CD8-positive, alpha-beta T cell (primary cell): ENCODE measurements at regions of chr15 and their contacts with region 1.

Region 1: GRCh38 chr15:45205192-45205591 is 17.4 kb upstream of the SHF start:
- DNase-seq: peak in 6 of 9 experiments; percentile 35 to 78 (median 61)
- ATAC-seq: peak; percentile 11
- H3K4me3 ChIP-seq: no peak overlapping the region
- H3K4me3 Mint-ChIP-seq: no peak overlapping the region
- H3K27ac ChIP-seq: no peak overlapping the region
- H3K27ac Mint-ChIP-seq: no peak overlapping the region
- H3K4me1 ChIP-seq: peaks cover 5% of the 10 kb centered on the region
- H3K4me1 Mint-ChIP-seq: no peaks in the 10 kb centered on the region
- H3K27me3 ChIP-seq: no peaks in the 10 kb centered on the region
- H3K27me3 Mint-ChIP-seq: peaks cover 12% of the 10 kb centered on the region
- CTCF ChIP-seq: peak; percentile 70

Region 2: GRCh38 chr15:45179221-45179985 is 25.8 kb before region 1 on chr15:
- CTCF ChIA-PET with region 1: interaction called, 34 read pairs
- POLR2A ChIA-PET with region 1: interaction called, 9 read pairs
- intact Hi-C with region 1: no loop called
- DNase-seq: peak in 8 of 9 experiments; percentile 37 to 71 (median 59)
- ATAC-seq: peak; percentile 67
- H3K4me3 ChIP-seq: no peak overlapping the region
- H3K4me3 Mint-ChIP-seq: no peak overlapping the region
- H3K27ac ChIP-seq: no peak overlapping the region
- H3K27ac Mint-ChIP-seq: no peak overlapping the region
- H3K4me1 ChIP-seq: no peaks in the 10 kb centered on the region
- H3K4me1 Mint-ChIP-seq: peaks cover 15% of the 10 kb centered on the region
- H3K27me3 ChIP-seq: no peaks in the 10 kb centered on the region
- H3K27me3 Mint-ChIP-seq: no peaks in the 10 kb centered on the region
- CTCF ChIP-seq: peak; percentile 46

Region 3: DNA sequence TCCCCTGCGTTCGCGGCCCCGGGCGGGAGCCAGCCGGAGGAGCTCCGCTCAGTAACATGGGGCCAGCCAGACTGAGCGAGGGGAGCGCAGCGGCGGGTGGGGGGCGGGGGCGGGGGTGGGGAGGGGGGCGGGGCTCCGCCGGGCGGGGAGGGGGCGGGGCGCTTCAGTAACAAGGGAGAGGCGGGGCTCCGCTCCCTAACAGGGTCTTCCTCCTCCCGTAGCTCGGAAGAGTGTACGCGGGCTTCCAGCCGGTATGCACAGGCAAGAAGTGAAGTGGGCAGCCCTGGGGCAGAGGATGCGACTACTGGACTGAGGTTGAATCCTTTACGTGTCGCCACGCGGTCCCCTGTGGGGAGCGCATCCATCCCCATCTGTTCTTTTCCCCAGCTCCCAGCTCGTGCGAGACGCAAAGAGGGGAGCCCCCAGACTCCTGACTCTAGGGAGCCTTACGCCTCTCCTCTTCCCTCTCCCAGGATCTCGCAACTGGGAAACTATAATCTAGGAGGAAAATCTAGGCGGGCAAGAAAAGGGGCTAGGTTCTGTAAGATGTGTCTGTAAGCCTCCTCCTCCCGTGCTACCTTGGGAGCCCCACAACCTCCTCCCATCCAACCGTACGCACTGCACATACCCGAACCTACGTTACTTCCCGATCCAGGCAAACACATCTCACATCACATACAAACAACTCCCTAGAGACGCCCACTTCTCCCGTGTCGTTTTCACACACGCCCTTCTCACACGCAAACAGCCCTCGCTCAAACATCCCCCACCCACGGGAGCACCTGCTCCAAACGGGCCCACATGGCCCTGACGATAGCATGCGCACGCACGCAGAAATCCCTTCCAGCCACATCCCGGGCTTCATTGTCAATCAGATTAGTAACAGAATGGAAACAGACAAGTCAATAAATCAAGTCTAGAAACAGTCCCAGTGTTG is 17.0 kb before region 1 on chr15 and contains the start of gene SHF:
- CTCF ChIA-PET with region 1: interaction called, 19 read pairs
- POLR2A ChIA-PET with region 1: interaction called, 107 read pairs
- intact Hi-C with region 1: no loop called
- DNase-seq: peak; percentile 24 to 87 (median 68)
- ATAC-seq: peak; percentile 79
- H3K4me3 ChIP-seq: peak within 1 kb of the TSS; percentile 84 to 99
- H3K4me3 Mint-ChIP-seq: peak within 1 kb of the TSS; percentile 89
- H3K27ac ChIP-seq: peak within 1 kb of the TSS; percentile 71 to 73
- H3K27ac Mint-ChIP-seq: peak within 1 kb of the TSS; percentile 90
- H3K4me1 ChIP-seq: peaks cover 16% of the 10 kb centered on the region
- H3K4me1 Mint-ChIP-seq: peaks cover 26% of the 10 kb centered on the region
- H3K27me3 ChIP-seq: no peaks in the 10 kb centered on the region
- H3K27me3 Mint-ChIP-seq: no peaks in the 10 kb centered on the region
- CTCF ChIP-seq: no peak
- total RNA-seq, gene SHF: 5.0 to 5.6 TPM

Region 4: DNA sequence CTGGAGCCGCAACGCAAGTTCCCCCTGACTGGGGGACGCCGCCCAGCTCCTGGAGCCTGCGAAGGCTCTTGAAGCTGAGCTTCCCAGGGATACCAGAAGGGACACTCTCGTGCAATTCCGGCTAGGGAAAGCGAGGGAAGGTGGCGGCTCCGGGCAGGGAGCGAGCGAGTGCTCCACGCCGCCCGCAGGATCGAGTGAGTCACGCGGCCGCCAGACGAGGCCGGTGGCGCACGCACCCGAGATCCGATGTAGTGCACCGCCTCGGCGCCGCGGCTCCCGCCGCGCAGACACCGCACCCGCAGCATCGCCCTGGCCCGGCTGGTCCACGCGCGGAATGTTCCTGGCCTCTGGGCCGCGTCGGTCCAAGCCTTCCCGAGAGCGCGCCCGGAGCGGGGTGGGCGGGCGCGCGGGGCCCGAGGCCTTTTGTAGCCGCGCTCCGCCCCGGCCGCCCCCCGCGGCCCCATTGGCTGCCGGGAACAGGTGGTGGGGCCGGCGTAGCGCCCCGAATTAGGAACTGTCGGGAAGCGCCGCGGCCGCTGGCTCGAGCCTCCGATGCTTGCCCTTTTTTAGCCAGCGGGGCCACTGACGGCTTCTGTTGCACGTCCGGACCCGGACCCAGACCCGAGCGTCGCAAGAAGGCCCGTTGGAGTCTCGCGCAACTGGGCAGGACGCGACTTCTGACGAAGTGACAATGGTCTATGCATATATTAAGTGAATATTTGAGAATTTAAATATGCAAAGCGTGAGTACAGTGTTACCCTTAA is 173.1 kb after region 1 on chr15 and contains the start of gene GATM:
- CTCF ChIA-PET with region 1: interaction called, 5 read pairs
- POLR2A ChIA-PET with region 1: interaction called, 4 read pairs
- intact Hi-C with region 1: loop called in 1 of 2 experiments (anchors 1 kb)
- DNase-seq: peak in 8 of 9 experiments; percentile 12 to 70 (median 52)
- ATAC-seq: peak; percentile 78
- H3K4me3 ChIP-seq: peak within 1 kb of the TSS; percentile 47 to 79
- H3K4me3 Mint-ChIP-seq: peak within 1 kb of the TSS; percentile 85
- H3K27ac ChIP-seq: no peak within 1 kb of the TSS
- H3K27ac Mint-ChIP-seq: peak within 1 kb of the TSS; percentile 62
- H3K4me1 ChIP-seq: peaks cover 17% of the 10 kb centered on the region
- H3K4me1 Mint-ChIP-seq: peaks cover 23% of the 10 kb centered on the region
- H3K27me3 ChIP-seq: peaks cover 5 to 19% of the 10 kb centered on the region in 2 experiments
- H3K27me3 Mint-ChIP-seq: peaks cover 39% of the 10 kb centered on the region
- CTCF ChIP-seq: no peak
- total RNA-seq, gene GATM: 0.44 to 0.87 TPM